CD8-positive, alpha-beta T cell (primary cell): ENCODE measurements at regions of chr9 and their contacts with region 1.

Region 1: GRCh38 chr9:75093840-75094239 is 5.5 kb downstream of the OSTF1 start:
- DNase-seq: no peak
- ATAC-seq: no peak
- H3K4me3 ChIP-seq: no peak overlapping the region
- H3K4me3 Mint-ChIP-seq: peak overlapping the region; percentile 4
- H3K27ac ChIP-seq: no peak overlapping the region
- H3K27ac Mint-ChIP-seq: peak overlapping the region; percentile 78
- H3K4me1 ChIP-seq: peaks cover 55% of the 10 kb centered on the region
- H3K4me1 Mint-ChIP-seq: peaks cover 87% of the 10 kb centered on the region
- H3K27me3 ChIP-seq: no peaks in the 10 kb centered on the region
- H3K27me3 Mint-ChIP-seq: no peaks in the 10 kb centered on the region
- CTCF ChIP-seq: no peak

Region 2: GRCh38 chr9:74711341-74711740 is 382.5 kb before region 1 on chr9:
- CTCF ChIA-PET with region 1: no interaction called
- POLR2A ChIA-PET with region 1: no interaction called
- intact Hi-C with region 1: no loop called
- DNase-seq: no peak
- ATAC-seq: no peak
- H3K4me3 ChIP-seq: no peak overlapping the region
- H3K4me3 Mint-ChIP-seq: no peak overlapping the region
- H3K27ac ChIP-seq: no peak overlapping the region
- H3K27ac Mint-ChIP-seq: no peak overlapping the region
- H3K4me1 ChIP-seq: no peaks in the 10 kb centered on the region
- H3K4me1 Mint-ChIP-seq: no peaks in the 10 kb centered on the region
- H3K27me3 ChIP-seq: no peaks in the 10 kb centered on the region
- H3K27me3 Mint-ChIP-seq: peaks cover 12% of the 10 kb centered on the region
- CTCF ChIP-seq: no peak

Region 3: GRCh38 chr9:75108555-75108954 is 14.7 kb after region 1 on chr9:
- CTCF ChIA-PET with region 1: interaction called, 4 read pairs
- POLR2A ChIA-PET with region 1: interaction called, 6 read pairs
- intact Hi-C with region 1: loop called (anchors 2 kb)
- DNase-seq: peak in 2 of 9 experiments; percentile 45 to 53
- ATAC-seq: no peak
- H3K4me3 ChIP-seq: no peak overlapping the region
- H3K4me3 Mint-ChIP-seq: no peak overlapping the region
- H3K27ac ChIP-seq: no peak overlapping the region
- H3K27ac Mint-ChIP-seq: peak overlapping the region; percentile 68
- H3K4me1 ChIP-seq: peaks cover 36% of the 10 kb centered on the region
- H3K4me1 Mint-ChIP-seq: peaks cover 72% of the 10 kb centered on the region
- H3K27me3 ChIP-seq: no peaks in the 10 kb centered on the region
- H3K27me3 Mint-ChIP-seq: no peaks in the 10 kb centered on the region
- CTCF ChIP-seq: no peak